Activated B cell treated with CpG ODN at 0.5 μM for 24 hours (primary cell): ENCODE measurements at regions of chr6 and their contacts with region 1.

Region 1: GRCh38 chr6:27753668-27754407 is 158.4 kb downstream of the OR2B2 start:
- DNase-seq: peak; percentile 53
- ATAC-seq: peak; percentile 59
- H3K4me3 Mint-ChIP-seq: peak overlapping the region; percentile 96
- H3K27ac Mint-ChIP-seq: peak overlapping the region; percentile 97
- H3K4me1 Mint-ChIP-seq: peaks cover 32% of the 10 kb centered on the region
- H3K27me3 Mint-ChIP-seq: no peaks in the 10 kb centered on the region
- CTCF ChIP-seq: no peak

Region 2: DNA sequence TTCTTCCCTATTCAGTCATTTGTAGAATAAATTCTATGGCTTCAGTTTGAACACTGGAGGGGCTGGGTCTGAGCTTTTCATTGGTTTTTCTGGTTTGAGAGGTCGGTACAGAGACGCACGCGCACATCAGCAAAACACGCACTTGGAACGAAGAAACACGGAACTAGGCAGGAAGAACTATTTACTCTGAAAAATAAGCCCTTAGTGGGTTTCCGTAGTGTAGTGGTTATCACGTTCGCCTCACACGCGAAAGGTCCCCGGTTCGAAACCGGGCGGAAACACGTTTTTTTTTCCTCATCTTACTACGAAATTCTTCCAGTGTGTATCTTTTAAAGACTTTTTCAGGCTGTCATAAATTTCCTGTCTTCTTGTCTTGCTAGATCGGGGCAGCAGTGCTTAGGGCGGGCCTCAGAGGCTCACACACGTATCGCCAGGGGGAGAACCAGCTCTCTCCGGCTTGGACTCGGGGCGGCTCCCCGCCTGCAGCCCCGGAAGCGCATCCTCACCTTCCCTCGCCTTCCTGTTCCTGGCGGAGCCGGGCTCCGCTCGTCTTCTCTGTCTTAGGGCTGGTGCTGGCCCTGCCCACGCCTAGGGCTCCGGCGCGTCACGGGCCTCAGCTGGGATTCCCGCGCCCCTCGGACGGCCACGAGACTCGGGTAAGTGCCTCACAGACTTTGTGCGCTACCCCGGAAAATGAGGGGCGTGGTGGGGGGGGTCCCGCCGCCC is 1215.8 kb before region 1 on chr6 and contains the start of gene HMGN4:
- CTCF ChIA-PET with region 1: no interaction called
- POLR2A ChIA-PET with region 1: no interaction called
- intact Hi-C with region 1: loop called (anchors 5 kb)
- DNase-seq: peak; percentile 73
- ATAC-seq: peak; percentile 67
- H3K4me3 Mint-ChIP-seq: peak within 1 kb of the TSS; percentile 98
- H3K27ac Mint-ChIP-seq: peak within 1 kb of the TSS; percentile 97
- H3K4me1 Mint-ChIP-seq: peaks cover 65% of the 10 kb centered on the region
- H3K27me3 Mint-ChIP-seq: peaks cover 7% of the 10 kb centered on the region
- CTCF ChIP-seq: no peak
- total RNA-seq, gene HMGN4: 74.5 and 82.2 TPM in 2 replicates

Region 3: DNA sequence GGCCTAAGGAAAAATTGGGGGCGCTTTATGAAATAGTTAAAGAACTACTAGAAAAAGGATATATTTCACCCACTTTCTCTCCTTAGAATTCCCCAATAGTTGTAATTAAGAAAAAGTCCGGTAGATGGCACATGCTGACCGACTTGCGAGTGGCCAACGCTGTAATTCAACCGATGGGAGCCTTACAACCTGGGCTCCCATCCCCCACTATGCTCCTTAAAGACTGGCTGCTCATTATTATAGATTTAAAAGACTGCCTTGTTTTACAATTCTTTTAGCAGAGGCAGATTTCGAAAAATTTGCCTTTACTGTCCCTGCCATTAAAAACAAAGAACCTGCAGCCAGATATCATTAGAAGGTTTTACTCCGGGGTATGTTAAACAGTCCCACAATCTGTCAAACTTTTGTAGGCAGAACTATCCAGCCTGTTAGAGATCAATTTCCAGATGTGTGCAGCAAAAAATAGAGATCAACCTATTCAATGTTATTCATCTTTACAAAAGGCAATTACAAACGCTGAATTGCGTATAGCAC is 564.9 kb before region 1 on chr6:
- CTCF ChIA-PET with region 1: interaction called, 3 read pairs
- POLR2A ChIA-PET with region 1: no interaction called
- intact Hi-C with region 1: loop called (anchors 1 kb)
- DNase-seq: no peak
- ATAC-seq: peak; percentile 80
- H3K4me3 Mint-ChIP-seq: peak overlapping the region; percentile 83
- H3K27ac Mint-ChIP-seq: peak overlapping the region; percentile 19
- H3K4me1 Mint-ChIP-seq: peaks cover 8% of the 10 kb centered on the region
- H3K27me3 Mint-ChIP-seq: peaks cover 2% of the 10 kb centered on the region
- CTCF ChIP-seq: no peak

Region 4: GRCh38 chr6:27503436-27504030 is 250.3 kb before region 1 on chr6:
- CTCF ChIA-PET with region 1: no interaction called
- POLR2A ChIA-PET with region 1: no interaction called
- intact Hi-C with region 1: loop called (anchors 1 kb)
- DNase-seq: peak; percentile 61
- ATAC-seq: peak; percentile 39
- H3K4me3 Mint-ChIP-seq: peak overlapping the region; percentile 87
- H3K27ac Mint-ChIP-seq: peak overlapping the region; percentile 77
- H3K4me1 Mint-ChIP-seq: peaks cover 35% of the 10 kb centered on the region
- H3K27me3 Mint-ChIP-seq: peaks cover 12% of the 10 kb centered on the region
- CTCF ChIP-seq: no peak

Region 5: GRCh38 chr6:27720607-27721580 is 32.9 kb before region 1 on chr6:
- CTCF ChIA-PET with region 1: no interaction called
- POLR2A ChIA-PET with region 1: no interaction called
- intact Hi-C with region 1: no loop called
- DNase-seq: no peak
- ATAC-seq: no peak
- H3K4me3 Mint-ChIP-seq: no peak overlapping the region
- H3K27ac Mint-ChIP-seq: no peak overlapping the region
- H3K4me1 Mint-ChIP-seq: peaks cover 8% of the 10 kb centered on the region
- H3K27me3 Mint-ChIP-seq: peaks cover 28% of the 10 kb centered on the region
- CTCF ChIP-seq: no peak

Region 6: GRCh38 chr6:27772261-27773001 is 18.6 kb after region 1 on chr6:
- CTCF ChIA-PET with region 1: interaction called, 22 read pairs
- POLR2A ChIA-PET with region 1: interaction called, 9 read pairs
- intact Hi-C with region 1: loop called (anchors 1 kb)
- DNase-seq: peak; percentile 74
- ATAC-seq: peak; percentile 92
- H3K4me3 Mint-ChIP-seq: peak overlapping the region; percentile 57
- H3K27ac Mint-ChIP-seq: peak overlapping the region; percentile 66
- H3K4me1 Mint-ChIP-seq: peaks cover 38% of the 10 kb centered on the region
- H3K27me3 Mint-ChIP-seq: peaks cover 5% of the 10 kb centered on the region
- CTCF ChIP-seq: peak; percentile 66

Region 7: DNA sequence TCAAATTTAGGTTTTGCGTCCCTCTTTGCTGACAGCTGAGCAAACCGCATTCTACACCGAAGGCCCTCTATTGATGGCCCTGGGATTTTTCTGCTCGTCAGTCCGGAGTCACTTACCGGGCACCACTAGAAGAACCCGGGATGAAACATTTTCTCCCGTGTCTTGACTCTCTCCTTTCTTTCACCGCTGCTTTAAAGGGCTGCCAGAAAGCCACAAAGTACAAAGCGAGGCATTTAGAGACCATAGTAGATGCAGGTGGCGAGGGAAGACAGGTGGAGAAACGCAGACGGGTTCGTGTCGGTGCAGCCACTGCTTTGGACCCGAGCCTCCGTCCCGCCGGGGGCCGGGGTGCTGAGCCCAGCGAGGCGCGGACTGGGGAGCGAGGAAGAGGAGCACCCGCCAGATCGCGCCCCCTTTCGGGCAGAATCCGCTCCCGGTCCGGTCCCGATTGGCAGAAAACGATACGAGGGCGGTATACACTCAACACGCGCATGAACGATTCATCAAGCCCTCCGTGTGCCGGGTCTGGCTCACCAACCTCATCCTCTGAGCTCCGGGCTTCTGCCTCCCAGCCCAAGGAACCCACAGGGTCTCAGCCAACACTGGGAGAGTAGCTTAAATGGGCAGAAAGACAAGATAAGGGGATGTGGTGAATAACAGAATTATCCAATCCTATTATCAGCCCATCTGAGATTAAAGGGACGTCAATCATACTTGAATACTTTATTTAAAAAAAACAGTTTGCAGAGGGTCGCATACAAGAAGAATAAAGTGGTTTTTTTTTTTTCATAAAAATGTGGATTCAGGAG is 1085.0 kb after region 1 on chr6:
- CTCF ChIA-PET with region 1: no interaction called
- POLR2A ChIA-PET with region 1: no interaction called
- intact Hi-C with region 1: loop called (anchors 5 kb)
- DNase-seq: peak; percentile 68
- ATAC-seq: peak; percentile 79
- H3K4me3 Mint-ChIP-seq: peak overlapping the region; percentile 92
- H3K27ac Mint-ChIP-seq: peak overlapping the region; percentile 89
- H3K4me1 Mint-ChIP-seq: peaks cover 24% of the 10 kb centered on the region
- H3K27me3 Mint-ChIP-seq: peaks cover 25% of the 10 kb centered on the region
- CTCF ChIP-seq: no peak